ENCODE measurements at regions of chr1 and their contacts with region 1.

Region 1: DNA sequence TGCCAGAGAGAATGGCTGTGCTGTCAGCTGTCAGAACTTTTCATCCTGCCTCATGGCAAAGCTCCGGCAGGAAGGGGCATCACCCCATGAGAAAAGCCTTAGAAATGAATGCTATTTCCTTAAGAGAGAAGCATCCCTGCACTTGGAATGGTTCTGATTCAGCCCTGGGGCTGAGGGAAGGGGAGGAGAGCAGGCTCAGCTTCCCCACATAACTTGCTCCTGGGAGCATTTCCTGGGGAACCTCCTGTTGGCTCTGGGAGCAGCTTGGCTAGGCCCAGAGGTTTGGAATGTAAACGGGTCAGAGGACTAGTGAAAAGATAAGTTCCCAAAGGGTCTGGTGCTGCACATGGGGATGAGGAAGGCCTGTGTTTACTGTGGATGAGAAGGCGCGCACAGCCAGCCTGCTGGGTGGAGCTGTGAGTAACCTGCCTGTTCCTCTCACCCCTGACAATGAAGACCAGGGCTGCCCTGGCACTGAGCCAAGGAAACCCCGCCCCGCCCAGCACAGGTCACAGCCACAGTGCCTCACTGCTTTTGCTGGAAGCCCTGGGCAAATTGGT is 5.0 kb downstream of the PRELP start:
- DNase-seq: peak; percentile 92
- H3K4me3 Mint-ChIP-seq: no peak overlapping the region
- H3K27ac Mint-ChIP-seq: no peak overlapping the region
- H3K4me1 Mint-ChIP-seq: peaks cover 20% of the 10 kb centered on the region
- H3K27me3 Mint-ChIP-seq: peaks cover 21% of the 10 kb centered on the region
- CTCF ChIP-seq: no peak

Region 2: DNA sequence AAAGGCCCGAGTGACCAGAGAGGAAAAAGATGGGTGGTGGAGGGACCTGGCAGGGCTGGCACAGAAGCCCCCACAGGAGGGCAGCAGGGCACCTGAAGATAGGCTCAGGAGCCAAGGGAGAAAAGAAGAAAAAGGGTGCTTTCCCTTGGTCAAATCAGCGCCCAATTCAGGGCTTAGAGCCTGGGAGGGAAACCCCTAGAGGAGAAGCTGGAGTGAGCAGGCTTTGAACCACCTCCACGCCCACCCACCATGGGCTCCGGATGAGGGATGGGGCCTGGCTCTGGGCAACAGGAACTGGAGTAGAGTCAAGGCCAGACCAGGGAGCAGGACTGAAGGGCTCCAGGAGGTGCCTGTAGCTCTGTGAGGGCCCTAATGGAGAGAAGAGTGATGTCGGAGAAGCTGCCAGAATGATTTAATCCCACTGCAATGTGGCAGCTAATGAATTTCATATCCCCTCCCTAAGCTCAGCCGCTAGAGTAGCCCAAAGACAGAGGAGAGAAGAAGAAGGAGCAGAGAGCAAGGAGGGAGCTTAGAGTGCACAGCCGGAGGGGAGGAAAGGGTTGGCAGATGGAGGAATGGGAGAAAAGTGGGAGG is 17.0 kb before region 1 on chr1:
- CTCF ChIA-PET with region 1: interaction called, 10 read pairs
- POLR2A ChIA-PET with region 1: interaction called, 5 read pairs
- intact Hi-C with region 1: loop called (anchors 2 kb)
- DNase-seq: no peak
- H3K4me3 Mint-ChIP-seq: no peak overlapping the region
- H3K27ac Mint-ChIP-seq: no peak overlapping the region
- H3K4me1 Mint-ChIP-seq: peaks cover 28% of the 10 kb centered on the region
- H3K27me3 Mint-ChIP-seq: peaks cover 35% of the 10 kb centered on the region
- CTCF ChIP-seq: no peak

Region 3: DNA sequence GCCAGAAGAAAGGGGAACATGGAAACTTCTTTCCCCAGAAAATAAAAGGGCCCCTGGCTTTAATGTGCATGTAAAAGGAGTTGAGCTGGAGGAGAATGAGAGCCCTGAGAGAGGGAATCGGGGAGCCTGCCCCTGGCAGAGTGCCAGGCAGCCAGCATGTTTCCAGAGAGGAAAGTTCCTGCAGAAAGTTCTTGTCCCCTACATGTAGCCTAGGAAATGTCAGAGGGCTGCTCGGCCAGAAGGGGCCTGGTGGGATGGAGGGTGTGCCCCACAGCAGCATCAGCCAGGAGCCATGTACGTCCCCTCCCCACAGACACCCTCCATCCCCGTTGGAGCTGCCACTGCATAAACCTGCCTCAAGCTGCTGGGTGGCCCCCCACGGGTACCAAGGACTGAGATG is 10.4 kb before region 1 on chr1:
- CTCF ChIA-PET with region 1: interaction called, 93 read pairs
- POLR2A ChIA-PET with region 1: interaction called, 5 read pairs
- intact Hi-C with region 1: no loop called
- DNase-seq: no peak
- H3K4me3 Mint-ChIP-seq: no peak overlapping the region
- H3K27ac Mint-ChIP-seq: no peak overlapping the region
- H3K4me1 Mint-ChIP-seq: no peaks in the 10 kb centered on the region
- H3K27me3 Mint-ChIP-seq: peaks cover 30% of the 10 kb centered on the region
- CTCF ChIP-seq: no peak

Region 4: GRCh38 chr1:203569490-203570318 is 89.1 kb after region 1 on chr1:
- CTCF ChIA-PET with region 1: no interaction called
- POLR2A ChIA-PET with region 1: no interaction called
- intact Hi-C with region 1: no loop called
- DNase-seq: no peak
- H3K4me3 Mint-ChIP-seq: no peak overlapping the region
- H3K27ac Mint-ChIP-seq: no peak overlapping the region
- H3K4me1 Mint-ChIP-seq: peaks cover 8% of the 10 kb centered on the region
- H3K27me3 Mint-ChIP-seq: no peaks in the 10 kb centered on the region
- CTCF ChIP-seq: no peak

Region 5: DNA sequence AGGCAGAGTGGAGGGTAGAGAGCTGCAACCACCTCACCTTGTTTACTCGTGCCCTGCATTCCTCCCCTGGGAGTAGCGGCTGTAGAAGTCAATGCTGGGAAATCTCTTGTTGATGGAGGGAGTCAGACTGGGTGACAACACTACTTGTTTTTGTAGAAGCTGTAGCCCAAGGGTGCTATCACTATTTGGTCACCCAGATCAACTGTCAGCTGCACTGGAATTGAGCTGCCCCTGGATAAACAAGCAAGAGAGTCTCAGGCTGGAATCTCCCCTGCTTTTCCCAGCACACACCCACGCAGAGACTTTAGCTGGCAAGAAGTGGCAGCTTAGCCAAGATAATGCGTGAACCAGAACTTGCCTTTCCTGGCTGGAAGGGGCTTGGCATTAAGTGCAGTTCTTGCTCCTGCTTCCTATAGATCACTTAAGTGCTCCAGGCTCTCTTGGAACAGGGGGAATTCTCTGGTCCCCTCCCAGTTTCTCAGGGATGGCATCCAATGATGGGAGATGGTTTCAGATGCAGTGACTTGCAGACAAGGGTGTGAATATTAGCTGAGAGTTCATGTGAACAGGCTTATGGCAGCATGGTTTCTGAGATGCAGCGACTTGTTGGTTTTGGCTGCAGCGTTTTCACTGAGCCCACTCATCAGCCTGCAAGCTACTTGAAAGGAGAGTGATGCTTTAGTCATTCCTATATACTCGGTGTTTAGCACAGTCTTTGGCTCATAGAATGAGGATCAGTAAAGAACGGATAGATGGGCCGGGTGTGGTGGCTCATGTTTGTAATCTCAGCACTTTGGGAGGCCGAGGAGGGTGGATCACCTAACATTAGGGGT is 162.8 kb after region 1 on chr1:
- CTCF ChIA-PET with region 1: no interaction called
- POLR2A ChIA-PET with region 1: no interaction called
- intact Hi-C with region 1: no loop called
- DNase-seq: peak; percentile 83
- H3K4me3 Mint-ChIP-seq: no peak overlapping the region
- H3K27ac Mint-ChIP-seq: peak overlapping the region; percentile 4
- H3K4me1 Mint-ChIP-seq: peaks cover 36% of the 10 kb centered on the region
- H3K27me3 Mint-ChIP-seq: no peaks in the 10 kb centered on the region
- CTCF ChIP-seq: no peak